Activated naive CD8-positive, alpha-beta T cell treated with anti-CD3 and anti-CD28 coated beads, Interleukin-2, amount 10 ng/mL, durations not matched to agents 7 days and 5 days (primary cell): ENCODE measurements at regions of chr5 and their contacts with region 1.

Region 1: DNA sequence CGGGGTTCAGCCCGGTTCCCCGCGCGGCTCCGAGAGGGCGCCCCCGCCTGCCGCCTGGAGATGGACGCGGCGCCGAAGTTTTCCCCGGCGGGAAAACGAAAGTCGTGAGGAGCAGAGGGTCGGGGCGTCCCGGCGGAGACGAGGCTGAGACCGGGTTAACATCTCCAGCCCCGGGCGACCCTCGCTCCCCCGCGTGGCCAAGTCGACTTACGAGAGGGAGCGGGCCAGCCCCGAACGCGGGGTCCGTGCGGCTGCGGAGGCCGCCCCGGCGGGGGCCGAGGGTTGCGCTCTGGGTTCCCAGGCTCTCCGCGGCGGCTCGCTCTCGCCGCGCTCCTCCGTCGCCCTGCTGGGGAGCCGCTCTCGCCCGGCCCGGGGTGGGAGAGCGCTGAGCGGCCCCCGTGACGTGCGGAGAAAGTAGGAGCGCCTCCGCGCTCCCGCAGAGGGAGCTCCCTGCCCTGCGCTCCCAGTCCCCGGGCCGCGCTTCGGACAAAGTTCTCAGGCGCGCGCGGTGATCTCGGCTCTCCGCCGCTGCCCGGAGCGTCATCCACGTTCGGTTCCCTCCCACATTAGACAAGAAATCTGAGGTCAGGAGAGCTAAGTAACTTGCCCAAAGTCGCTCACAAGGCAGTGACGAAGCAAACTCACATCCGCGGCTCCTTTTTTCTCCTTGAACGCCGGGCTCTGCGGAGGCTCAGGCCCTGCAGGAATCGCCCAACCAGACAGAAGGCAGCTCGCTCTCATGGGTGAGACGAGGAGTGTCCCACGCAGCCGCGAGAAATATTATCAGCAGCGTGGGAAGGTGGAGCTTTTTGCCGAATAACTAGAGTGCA is 1.2 kb upstream of the GCNT4 start:
- DNase-seq: peak; percentile 75
- ATAC-seq: peak; percentile 42
- H3K4me3 Mint-ChIP-seq: peak overlapping the region; percentile 88
- H3K27ac Mint-ChIP-seq: peak overlapping the region; percentile 86
- H3K4me1 Mint-ChIP-seq: peaks cover 61% of the 10 kb centered on the region
- H3K27me3 Mint-ChIP-seq: no peaks in the 10 kb centered on the region

Region 2: GRCh38 chr5:75034137-75034750 is 19.3 kb before region 1 on chr5:
- POLR2A ChIA-PET with region 1: interaction called, 13 read pairs
- DNase-seq: peak; percentile 50
- ATAC-seq: peak; percentile 98
- H3K4me3 Mint-ChIP-seq: peak overlapping the region; percentile 19
- H3K27ac Mint-ChIP-seq: peak overlapping the region; percentile 70
- H3K4me1 Mint-ChIP-seq: peaks cover 20% of the 10 kb centered on the region
- H3K27me3 Mint-ChIP-seq: no peaks in the 10 kb centered on the region

Region 3: GRCh38 chr5:75236322-75237316 is 183.1 kb after region 1 on chr5 and contains the start of gene ANKRD31:
- POLR2A ChIA-PET with region 1: interaction called, 31 read pairs
- DNase-seq: peak; percentile 97
- ATAC-seq: peak; percentile 96
- H3K4me3 Mint-ChIP-seq: peak within 1 kb of the TSS; percentile 92
- H3K27ac Mint-ChIP-seq: peak within 1 kb of the TSS; percentile 98
- H3K4me1 Mint-ChIP-seq: peaks cover 14% of the 10 kb centered on the region
- H3K27me3 Mint-ChIP-seq: no peaks in the 10 kb centered on the region
- total RNA-seq, gene ANKRD31: 0.51 to 0.58 TPM